Activated naive CD4-positive, alpha-beta T cell treated with anti-CD3 and anti-CD28 coated beads for 36 hours (primary cell): ENCODE measurements at regions of chr5 and their contacts with region 1.

Region 1: GRCh38 chr5:139844472-139845145 is 49.0 kb downstream of the PSD2 start:
- DNase-seq: peak; percentile 90
- H3K4me3 Mint-ChIP-seq: no peak overlapping the region
- H3K27ac Mint-ChIP-seq: no peak overlapping the region
- H3K4me1 Mint-ChIP-seq: peaks cover 5% of the 10 kb centered on the region
- H3K27me3 Mint-ChIP-seq: peaks cover 16% of the 10 kb centered on the region

Region 2: GRCh38 chr5:138752951-138753793 is 1091.4 kb before region 1 on chr5 and contains the start of gene CTNNA1:
- CTCF ChIA-PET with region 1: no interaction called
- intact Hi-C with region 1: no loop called
- DNase-seq: peak; percentile 48
- H3K4me3 Mint-ChIP-seq: peak within 1 kb of the TSS; percentile 74
- H3K27ac Mint-ChIP-seq: peak within 1 kb of the TSS; percentile 32
- H3K4me1 Mint-ChIP-seq: peaks cover 19% of the 10 kb centered on the region
- H3K27me3 Mint-ChIP-seq: peaks cover 48% of the 10 kb centered on the region
- total RNA-seq, gene CTNNA1: 36.8 to 43.0 TPM

Region 3: DNA sequence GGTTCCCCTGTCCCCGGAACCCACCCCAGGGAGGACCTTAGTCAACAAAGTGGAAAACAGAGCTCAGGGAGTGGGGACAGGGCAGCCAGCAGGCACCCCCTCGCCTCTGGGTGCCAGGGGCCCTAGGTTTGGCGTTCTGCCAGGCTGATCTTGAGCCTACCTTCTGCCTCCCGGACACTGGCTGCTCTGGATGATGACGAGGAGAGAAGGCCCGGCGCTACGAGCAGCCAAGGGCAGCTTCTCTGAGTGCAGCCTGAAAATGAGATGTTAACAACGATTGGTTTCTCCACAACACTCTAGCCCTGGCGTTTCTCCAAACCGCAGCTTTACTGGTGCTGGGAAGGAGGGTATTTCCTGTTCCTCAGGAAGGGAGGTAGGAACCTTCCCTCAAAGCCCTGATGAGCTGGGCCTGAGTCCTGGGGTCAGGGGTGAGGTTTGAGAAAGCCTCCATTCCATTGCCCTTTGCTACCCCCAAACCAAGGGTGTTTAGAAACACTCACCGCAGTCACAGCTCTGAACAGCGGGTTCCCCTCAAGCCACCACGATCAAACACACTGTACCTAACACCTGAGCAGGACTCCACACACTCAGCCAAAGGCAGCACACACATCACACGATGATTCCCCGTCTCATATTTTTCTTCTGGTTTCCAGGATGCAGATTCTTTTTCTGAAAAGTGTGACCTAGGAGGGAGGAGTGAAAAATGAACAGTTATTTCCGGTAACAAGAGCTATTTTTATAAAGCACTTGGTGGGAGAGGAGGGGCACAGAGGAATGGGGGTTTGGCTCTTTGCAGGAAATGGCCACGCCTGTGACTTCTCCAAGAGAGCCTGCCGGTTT is 362.3 kb before region 1 on chr5 and contains the start of gene STING1:
- CTCF ChIA-PET with region 1: no interaction called
- intact Hi-C with region 1: no loop called
- DNase-seq: peak; percentile 90
- H3K4me3 Mint-ChIP-seq: peak within 1 kb of the TSS; percentile 100
- H3K27ac Mint-ChIP-seq: peak within 1 kb of the TSS; percentile 100
- H3K4me1 Mint-ChIP-seq: peaks cover 46% of the 10 kb centered on the region
- H3K27me3 Mint-ChIP-seq: no peaks in the 10 kb centered on the region
- total RNA-seq, gene STING1: 136 to 140 TPM

Region 4: GRCh38 chr5:139774980-139775661 is 69.5 kb before region 1 on chr5:
- CTCF ChIA-PET with region 1: interaction called, 11 read pairs
- intact Hi-C with region 1: no loop called
- DNase-seq: peak; percentile 84
- H3K4me3 Mint-ChIP-seq: peak overlapping the region; percentile 14
- H3K27ac Mint-ChIP-seq: no peak overlapping the region
- H3K4me1 Mint-ChIP-seq: peaks cover 8% of the 10 kb centered on the region
- H3K27me3 Mint-ChIP-seq: no peaks in the 10 kb centered on the region

Region 5: GRCh38 chr5:139863855-139864558 is 19.4 kb after region 1 on chr5:
- CTCF ChIA-PET with region 1: interaction called, 13 read pairs
- intact Hi-C with region 1: loop called (anchors 2 kb)
- DNase-seq: peak; percentile 69
- H3K4me3 Mint-ChIP-seq: no peak overlapping the region
- H3K27ac Mint-ChIP-seq: no peak overlapping the region
- H3K4me1 Mint-ChIP-seq: no peaks in the 10 kb centered on the region
- H3K27me3 Mint-ChIP-seq: no peaks in the 10 kb centered on the region